ENCODE measurements at regions of chr6 and their contacts with region 1.

Region 1: DNA sequence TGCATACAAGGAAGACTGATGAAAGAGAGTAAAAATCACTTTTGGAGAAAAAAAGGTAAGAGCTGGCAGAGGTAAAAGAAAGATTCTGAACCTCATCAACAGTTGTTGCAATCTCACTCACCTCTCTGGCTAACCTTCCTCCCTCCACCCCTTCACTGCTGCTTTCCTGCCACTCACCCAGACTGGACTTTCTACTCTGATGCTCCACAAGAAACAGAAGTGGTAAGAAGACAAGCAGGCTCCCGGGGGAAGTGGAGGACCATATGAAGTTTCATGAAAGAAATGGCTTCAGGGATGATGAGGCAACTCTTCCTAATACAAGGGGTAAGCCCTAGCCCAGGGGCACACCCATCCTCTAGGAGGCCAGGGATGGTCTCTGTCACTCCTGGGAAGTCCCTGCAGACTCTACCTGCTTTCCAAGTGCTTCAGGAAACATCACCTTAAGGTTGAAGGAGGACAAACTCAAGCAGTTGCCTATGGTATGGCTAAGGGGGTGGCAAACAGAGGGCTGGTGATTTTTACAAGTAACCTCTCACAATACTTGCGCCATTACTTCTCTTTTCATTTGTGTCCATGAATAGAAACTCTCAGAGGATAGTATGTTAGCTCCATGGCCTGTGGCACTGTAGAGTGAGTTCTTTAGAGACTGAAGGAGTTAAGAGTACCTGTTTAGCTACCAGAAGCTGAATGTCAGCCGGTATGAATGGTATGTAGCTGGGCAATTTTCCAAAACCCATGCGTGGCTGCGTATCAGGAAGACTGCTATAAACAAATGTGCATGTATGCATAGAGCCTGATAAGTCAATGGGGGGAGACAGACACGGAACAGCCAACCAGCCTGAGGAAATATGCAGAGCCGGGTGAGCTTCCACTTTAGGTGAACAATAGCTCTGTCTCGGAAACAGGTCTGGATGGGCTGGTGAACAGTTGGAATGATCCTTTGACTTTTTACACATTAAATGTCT is 112.0 kb downstream of the BACH2 start:
- DNase-seq: peak; percentile 77
- H3K4me3 Mint-ChIP-seq: peak overlapping the region; percentile 39
- H3K27ac Mint-ChIP-seq: peak overlapping the region; percentile 83
- H3K4me1 Mint-ChIP-seq: peaks cover 32% of the 10 kb centered on the region
- H3K27me3 Mint-ChIP-seq: no peaks in the 10 kb centered on the region
- CTCF ChIP-seq: no peak

Region 2: GRCh38 chr6:90216072-90216977 is 31.7 kb after region 1 on chr6:
- CTCF ChIA-PET with region 1: interaction called, 8 read pairs
- intact Hi-C with region 1: loop called (anchors 2 kb)
- DNase-seq: no peak
- H3K4me3 Mint-ChIP-seq: no peak overlapping the region
- H3K27ac Mint-ChIP-seq: no peak overlapping the region
- H3K4me1 Mint-ChIP-seq: peaks cover 6% of the 10 kb centered on the region
- H3K27me3 Mint-ChIP-seq: no peaks in the 10 kb centered on the region
- CTCF ChIP-seq: no peak

Region 3: DNA sequence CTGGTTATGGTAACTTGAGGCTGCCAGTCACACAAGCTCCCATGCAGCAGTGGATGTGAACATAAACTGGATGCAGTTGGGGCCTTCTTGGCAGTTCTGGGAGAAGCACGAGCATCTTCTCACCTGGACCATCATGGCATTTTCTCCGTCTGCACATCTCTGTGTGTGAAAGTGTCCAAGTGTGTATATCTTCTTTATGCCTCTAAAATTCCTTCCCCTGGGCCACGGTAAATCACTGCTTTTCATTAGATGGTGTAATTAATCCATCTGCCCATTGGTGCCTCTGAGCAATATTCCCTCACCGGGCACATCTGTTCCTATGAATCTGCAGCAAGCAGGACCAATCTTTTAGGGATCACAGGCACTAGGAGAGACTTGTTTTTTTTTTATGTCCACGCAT is 264.2 kb after region 1 on chr6:
- CTCF ChIA-PET with region 1: no interaction called
- intact Hi-C with region 1: no loop called
- DNase-seq: no peak
- H3K4me3 Mint-ChIP-seq: no peak overlapping the region
- H3K27ac Mint-ChIP-seq: no peak overlapping the region
- H3K4me1 Mint-ChIP-seq: no peaks in the 10 kb centered on the region
- H3K27me3 Mint-ChIP-seq: no peaks in the 10 kb centered on the region
- CTCF ChIP-seq: no peak

Region 4: GRCh38 chr6:90478789-90479602 is 294.4 kb after region 1 on chr6:
- CTCF ChIA-PET with region 1: no interaction called
- intact Hi-C with region 1: loop called (anchors 5 kb)
- DNase-seq: peak; percentile 89
- H3K4me3 Mint-ChIP-seq: peak overlapping the region; percentile 15
- H3K27ac Mint-ChIP-seq: peak overlapping the region; percentile 70
- H3K4me1 Mint-ChIP-seq: peaks cover 17% of the 10 kb centered on the region
- H3K27me3 Mint-ChIP-seq: no peaks in the 10 kb centered on the region
- CTCF ChIP-seq: peak; percentile 75

Measured in Calu3 (cell line).